ENCODE measurements at regions of chr14 and their contacts with region 1.

Region 1: GRCh38 chr14:30402846-30403245 is 156.1 kb upstream of the G2E3 start:
- DNase-seq: no peak
- H3K4me3 ChIP-seq: no peak overlapping the region
- H3K27ac ChIP-seq: no peak overlapping the region
- H3K4me1 ChIP-seq: no peaks in the 10 kb centered on the region
- H3K27me3 ChIP-seq: no peaks in the 10 kb centered on the region
- CTCF ChIP-seq: no peak
- POLR2A ChIP-seq: no peak

Region 2: GRCh38 chr14:30252783-30253674 is 149.8 kb before region 1 on chr14:
- intact Hi-C with region 1: no loop called
- DNase-seq: no peak
- H3K4me3 ChIP-seq: no peak overlapping the region
- H3K27ac ChIP-seq: no peak overlapping the region
- H3K4me1 ChIP-seq: no peaks in the 10 kb centered on the region
- H3K27me3 ChIP-seq: no peaks in the 10 kb centered on the region
- CTCF ChIP-seq: no peak
- POLR2A ChIP-seq: no peak

Region 3: GRCh38 chr14:30330445-30330844 is 72.4 kb before region 1 on chr14:
- intact Hi-C with region 1: loop called (anchors 2 kb)
- DNase-seq: no peak
- H3K4me3 ChIP-seq: no peak overlapping the region
- H3K27ac ChIP-seq: no peak overlapping the region
- H3K4me1 ChIP-seq: no peaks in the 10 kb centered on the region
- H3K27me3 ChIP-seq: no peaks in the 10 kb centered on the region
- CTCF ChIP-seq: no peak
- POLR2A ChIP-seq: no peak

Region 4: GRCh38 chr14:30417121-30417520 is 14.3 kb after region 1 on chr14:
- intact Hi-C with region 1: no loop called
- DNase-seq: no peak
- H3K4me3 ChIP-seq: no peak overlapping the region
- H3K27ac ChIP-seq: no peak overlapping the region
- H3K4me1 ChIP-seq: no peaks in the 10 kb centered on the region
- H3K27me3 ChIP-seq: no peaks in the 10 kb centered on the region
- CTCF ChIP-seq: no peak
- POLR2A ChIP-seq: no peak